ENCODE measurements at regions of chr19 and their contacts with region 1.

Region 1: GRCh38 chr19:35748106-35749020 is at the start of gene LIN37:
- DNase-seq: peak; percentile 100
- ATAC-seq: peak; percentile 81
- H3K4me3 Mint-ChIP-seq: peak within 1 kb of the TSS; percentile 99
- H3K27ac Mint-ChIP-seq: peak within 1 kb of the TSS; percentile 96
- H3K4me1 Mint-ChIP-seq: peaks cover 36% of the 10 kb centered on the region
- H3K27me3 Mint-ChIP-seq: no peaks in the 10 kb centered on the region
- CTCF ChIP-seq: no peak
- total RNA-seq, gene LIN37: 4.5 to 7.8 TPM

Region 2: GRCh38 chr19:35693830-35694599 is 54.3 kb before region 1 on chr19:
- CTCF ChIA-PET with region 1: interaction called, 10 read pairs
- POLR2A ChIA-PET with region 1: no interaction called
- intact Hi-C with region 1: no loop called
- DNase-seq: peak; percentile 96
- ATAC-seq: peak; percentile 97
- H3K4me3 Mint-ChIP-seq: no peak overlapping the region
- H3K27ac Mint-ChIP-seq: peak overlapping the region; percentile 58
- H3K4me1 Mint-ChIP-seq: peaks cover 25% of the 10 kb centered on the region
- H3K27me3 Mint-ChIP-seq: no peaks in the 10 kb centered on the region
- CTCF ChIP-seq: peak; percentile 99

Region 3: DNA sequence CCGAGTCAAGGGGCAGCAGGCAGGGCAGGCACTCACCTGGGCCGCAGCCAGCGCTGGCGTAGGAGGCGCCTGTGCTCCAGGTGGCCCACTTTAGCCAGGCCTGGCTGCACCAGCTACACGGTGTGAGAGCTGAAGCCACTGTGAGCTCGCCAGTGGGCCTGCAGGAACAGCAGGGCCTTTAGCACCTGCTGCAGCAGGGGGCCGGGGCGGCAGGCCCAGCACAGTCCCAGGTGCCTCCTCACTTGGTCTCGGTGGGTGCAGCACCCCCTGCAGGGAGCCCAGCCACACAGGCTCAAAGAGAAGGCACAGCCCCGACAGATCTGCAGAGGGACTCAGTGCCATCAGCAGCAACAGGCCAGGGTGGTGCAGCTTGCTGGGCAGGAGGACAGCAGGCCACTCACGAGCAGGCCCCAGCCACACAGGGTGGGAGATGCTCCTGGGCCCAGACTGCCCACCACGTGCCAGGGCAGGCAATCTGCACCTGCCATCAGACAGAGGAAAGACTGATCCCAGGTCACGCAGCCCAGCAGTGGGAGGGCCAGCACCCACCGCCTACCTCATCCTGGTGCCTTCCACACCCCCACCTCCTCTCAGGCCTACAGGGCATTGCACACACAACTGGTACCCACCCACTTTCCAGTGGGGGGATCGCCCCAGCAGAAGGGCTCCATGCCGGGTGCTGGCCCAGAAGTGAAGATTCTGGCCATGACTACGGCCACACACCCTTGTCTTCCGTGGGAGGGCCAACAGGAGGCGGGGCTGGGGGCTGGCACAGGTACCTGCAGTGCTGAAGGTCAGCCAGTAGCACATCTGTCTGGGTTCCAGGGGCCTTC is 42.8 kb after region 1 on chr19:
- CTCF ChIA-PET with region 1: no interaction called
- POLR2A ChIA-PET with region 1: no interaction called
- intact Hi-C with region 1: no loop called
- DNase-seq: peak; percentile 39
- ATAC-seq: peak; percentile 72
- H3K4me3 Mint-ChIP-seq: no peak overlapping the region
- H3K27ac Mint-ChIP-seq: no peak overlapping the region
- H3K4me1 Mint-ChIP-seq: no peaks in the 10 kb centered on the region
- H3K27me3 Mint-ChIP-seq: peaks cover 8% of the 10 kb centered on the region
- CTCF ChIP-seq: no peak

Measured in activated CD8-positive, alpha-beta T cell treated with anti-CD3 and anti-CD28 coated beads for 36 hours (primary cell).